ENCODE measurements at regions of chr12 and their contacts with region 1.

Region 1: GRCh38 chr12:75722714-75723200 is 211.3 kb upstream of the KRR1 start:
- DNase-seq: peak in 4 of 5 donors; percentile 44 to 72 (median 54)
- ATAC-seq: peak; percentile 33 to 88 (median 82)
- H3K4me3 ChIP-seq: no peak overlapping the region
- H3K27ac ChIP-seq: peak overlapping the region; percentile 39 to 80 (median 75)
- H3K4me1 ChIP-seq: peaks cover 9 to 57% (median 42%) of the 10 kb centered on the region in 12 donors
- H3K27me3 ChIP-seq: no peaks in the 10 kb centered on the region
- CTCF ChIP-seq: no peak
- POLR2A ChIP-seq: no peak

Region 2: GRCh38 chr12:75560167-75560566 is 162.6 kb before region 1 on chr12:
- intact Hi-C with region 1: loop called in 1 of 10 experiments (anchors 10 kb)
- DNase-seq: no peak
- ATAC-seq: peak in 3 of 4 donors; percentile 68 to 83 (median 80)
- H3K4me3 ChIP-seq: no peak overlapping the region
- H3K27ac ChIP-seq: no peak overlapping the region
- H3K4me1 ChIP-seq: peaks cover 0 to 11% (median 0%) of the 10 kb centered on the region in 12 donors
- H3K27me3 ChIP-seq: no peaks in the 10 kb centered on the region
- CTCF ChIP-seq: peak in 11 of 12 donors; percentile 10 to 68 (median 48)
- POLR2A ChIP-seq: no peak

Region 3: GRCh38 chr12:75623631-75624118 is 99.1 kb before region 1 on chr12:
- intact Hi-C with region 1: no loop called
- DNase-seq: peak in 1 of 5 donors; percentile 27
- ATAC-seq: peak; percentile 88 to 95 (median 94)
- H3K4me3 ChIP-seq: no peak overlapping the region
- H3K27ac ChIP-seq: peak overlapping the region in 3 of 12 donors; percentile 21 to 45 (median 36)
- H3K4me1 ChIP-seq: peaks cover 0 to 10% (median 0%) of the 10 kb centered on the region in 12 donors
- H3K27me3 ChIP-seq: no peaks in the 10 kb centered on the region
- CTCF ChIP-seq: peak in 10 of 12 donors; percentile 5 to 50 (median 38)
- POLR2A ChIP-seq: no peak

Region 4: GRCh38 chr12:75705749-75706711 is 16.7 kb before region 1 on chr12:
- intact Hi-C with region 1: loop called in 1 of 10 experiments (anchors 2 kb)
- DNase-seq: peak; percentile 52 to 70 (median 66)
- ATAC-seq: peak; percentile 85 to 89 (median 86)
- H3K4me3 ChIP-seq: peak overlapping the region in 1 of 12 donors; percentile 12
- H3K27ac ChIP-seq: peak overlapping the region; percentile 31 to 86 (median 74)
- H3K4me1 ChIP-seq: peaks cover 0 to 53% (median 44%) of the 10 kb centered on the region in 12 donors
- H3K27me3 ChIP-seq: no peaks in the 10 kb centered on the region
- CTCF ChIP-seq: no peak
- POLR2A ChIP-seq: no peak